ENCODE measurements at regions of chrX and their contacts with region 1.

Region 1: DNA sequence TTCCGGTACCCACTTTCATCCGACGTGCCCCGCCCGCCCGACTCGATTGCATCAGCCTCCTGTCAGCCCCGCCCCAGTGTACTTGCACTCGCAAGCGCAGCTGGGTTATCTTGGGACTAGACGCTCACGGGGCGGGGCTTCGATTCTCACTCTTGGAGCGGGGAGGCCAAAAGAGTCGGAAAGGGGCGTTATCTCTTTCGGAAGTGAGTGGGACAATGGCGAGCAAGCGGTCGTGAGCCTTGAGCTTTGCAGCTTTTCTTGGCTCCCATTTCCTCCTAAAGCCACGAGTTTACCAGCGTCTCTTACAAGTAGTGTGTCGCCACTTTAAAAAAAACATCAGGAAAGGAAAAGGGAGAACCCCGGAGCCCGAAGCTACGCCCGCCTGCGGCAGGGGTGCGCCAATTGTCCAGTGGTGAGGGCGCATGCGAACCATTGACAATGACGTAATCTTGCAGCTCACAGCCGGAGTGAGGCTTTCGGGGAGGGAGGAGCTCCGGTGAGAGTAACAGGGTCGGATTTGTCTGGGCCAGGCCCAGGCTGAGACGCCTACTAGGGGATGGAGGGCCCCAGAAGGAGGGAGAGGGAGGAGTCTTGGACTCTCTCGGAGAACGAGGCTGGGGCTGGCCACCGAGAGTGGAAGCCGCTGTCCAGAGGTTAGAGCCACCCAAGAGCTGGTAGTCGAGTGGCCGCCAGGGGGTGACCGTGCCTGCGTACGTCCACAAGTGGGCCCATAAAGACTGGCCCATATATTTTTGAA is 109.5 kb downstream of the GNL3L start:
- DNase-seq: peak; percentile 95 to 98
- ATAC-seq: peak; percentile 83 to 90 (median 86)
- H3K4me3 ChIP-seq: peak overlapping the region; percentile 66
- H3K27ac ChIP-seq: peak overlapping the region; percentile 91
- H3K4me1 ChIP-seq: peaks cover 9% of the 10 kb centered on the region
- H3K27me3 ChIP-seq: no peaks in the 10 kb centered on the region
- CTCF ChIP-seq: peak; percentile 64

Region 2: GRCh38 chrX:54182864-54183608 is 456.5 kb before region 1 on chrX and contains the start of gene FAM120C:
- intact Hi-C with region 1: no loop called
- DNase-seq: peak; percentile 70 to 81
- ATAC-seq: peak; percentile 86 to 92 (median 90)
- H3K4me3 ChIP-seq: peak within 1 kb of the TSS; percentile 82
- H3K27ac ChIP-seq: peak within 1 kb of the TSS; percentile 89
- H3K4me1 ChIP-seq: peaks cover 8% of the 10 kb centered on the region
- H3K27me3 ChIP-seq: peaks cover 0 to 7% (median 0%) of the 10 kb centered on the region in 3 donors
- CTCF ChIP-seq: no peak
- total RNA-seq, gene FAM120C: 6.6 to 13.0 (median 7.8) TPM

Region 3: DNA sequence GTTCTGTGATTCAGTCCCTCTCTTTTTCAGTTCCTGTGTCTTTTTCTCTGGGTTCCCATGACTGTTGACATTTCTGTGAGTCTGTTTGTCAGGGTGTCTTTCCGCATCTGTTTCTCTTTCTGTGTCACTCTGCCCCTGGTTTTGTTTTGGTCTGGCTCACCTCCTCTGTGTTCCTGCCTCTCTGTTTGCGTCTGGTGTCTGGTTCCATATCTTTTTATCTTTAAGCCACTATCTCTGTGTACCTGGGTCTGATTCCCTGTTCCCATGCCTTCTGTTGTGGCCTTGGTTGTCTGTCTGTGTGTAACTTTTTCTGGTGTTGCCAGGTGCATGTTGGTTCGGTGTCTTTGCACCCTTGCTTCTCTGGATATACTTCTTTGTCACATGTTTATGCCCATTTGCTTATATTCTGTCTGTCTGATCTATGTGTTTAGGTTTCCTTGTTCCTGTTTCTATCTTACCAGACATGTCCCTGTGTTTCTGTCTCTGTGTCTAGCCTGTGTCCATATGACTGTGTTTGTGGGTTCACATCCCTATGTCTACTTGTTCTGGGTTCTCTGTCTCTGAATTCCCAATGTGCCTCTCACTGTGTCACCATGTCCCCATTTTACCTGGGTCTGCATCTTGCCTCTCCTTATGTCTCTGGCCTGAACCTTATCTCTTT is 108.3 kb after region 1 on chrX:
- intact Hi-C with region 1: loop called in 1 of 2 experiments (anchors 5 kb)
- DNase-seq: no peak
- ATAC-seq: peak in 2 of 4 donors; percentile 15 to 27
- H3K4me3 ChIP-seq: peak overlapping the region; percentile 59
- H3K27ac ChIP-seq: peak overlapping the region; percentile 64
- H3K4me1 ChIP-seq: no peaks in the 10 kb centered on the region
- H3K27me3 ChIP-seq: peaks cover 0 to 15% (median 0%) of the 10 kb centered on the region in 3 donors
- CTCF ChIP-seq: no peak

Region 4: DNA sequence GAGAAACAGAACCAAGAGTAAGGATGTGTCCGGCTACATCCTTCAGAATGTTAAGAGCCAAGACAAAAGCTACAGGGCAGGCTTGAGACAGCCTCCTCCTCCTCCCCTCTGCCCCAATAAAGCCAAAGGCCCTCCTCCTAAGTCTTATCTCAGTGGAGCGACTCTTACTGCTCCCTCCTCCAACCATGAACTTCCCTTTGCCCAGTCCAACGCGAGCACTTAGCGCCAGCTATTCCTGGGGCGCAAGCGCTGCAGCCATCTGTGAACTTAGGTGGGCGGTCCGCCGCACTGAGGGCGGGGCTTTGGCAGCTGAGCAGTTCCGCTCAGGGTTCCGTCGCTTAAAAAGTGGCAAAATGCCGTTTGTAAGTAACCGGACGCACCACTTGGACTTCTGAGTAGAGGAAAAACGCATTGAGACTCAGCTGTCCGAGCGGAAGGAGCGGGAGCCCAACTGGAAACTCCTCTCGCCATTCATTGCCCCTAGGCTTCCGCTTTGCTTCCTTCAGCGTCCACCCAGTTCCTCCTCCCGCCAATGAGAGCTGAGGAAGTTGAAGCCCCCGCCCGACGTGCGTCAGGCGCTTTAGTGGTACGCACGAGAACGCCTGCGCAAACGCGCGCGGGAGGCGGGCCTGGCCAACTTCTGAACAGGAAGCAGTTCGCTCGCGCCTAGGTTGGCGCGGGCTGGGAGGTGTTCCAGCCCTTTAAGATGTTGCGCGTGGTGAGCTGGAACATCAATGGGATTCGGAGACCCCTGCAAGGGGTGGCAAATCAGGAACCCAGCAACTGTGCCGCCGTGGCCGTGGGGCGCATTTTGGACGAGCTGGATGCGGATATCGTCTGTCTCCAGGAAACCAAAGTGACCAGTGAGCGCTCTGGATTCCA is 360.4 kb after region 1 on chrX and contains the start of gene APEX2:
- intact Hi-C with region 1: loop called in 1 of 2 experiments (anchors 10 kb)
- DNase-seq: peak; percentile 92 to 95
- ATAC-seq: peak; percentile 87 to 93 (median 92)
- H3K4me3 ChIP-seq: peak within 1 kb of the TSS; percentile 80
- H3K27ac ChIP-seq: peak within 1 kb of the TSS; percentile 90
- H3K4me1 ChIP-seq: no peaks in the 10 kb centered on the region
- H3K27me3 ChIP-seq: no peaks in the 10 kb centered on the region
- CTCF ChIP-seq: no peak
- total RNA-seq, gene APEX2: 6.9 to 14.9 (median 10.0) TPM